Activated CD8-positive, alpha-beta memory T cell treated with anti-CD3 and anti-CD28 coated beads, Interleukin-2, amount 10 ng/mL, durations not matched to agents 7 days and 5 days (primary cell): ENCODE measurements at regions of chr16 and their contacts with region 1.

Region 1: DNA sequence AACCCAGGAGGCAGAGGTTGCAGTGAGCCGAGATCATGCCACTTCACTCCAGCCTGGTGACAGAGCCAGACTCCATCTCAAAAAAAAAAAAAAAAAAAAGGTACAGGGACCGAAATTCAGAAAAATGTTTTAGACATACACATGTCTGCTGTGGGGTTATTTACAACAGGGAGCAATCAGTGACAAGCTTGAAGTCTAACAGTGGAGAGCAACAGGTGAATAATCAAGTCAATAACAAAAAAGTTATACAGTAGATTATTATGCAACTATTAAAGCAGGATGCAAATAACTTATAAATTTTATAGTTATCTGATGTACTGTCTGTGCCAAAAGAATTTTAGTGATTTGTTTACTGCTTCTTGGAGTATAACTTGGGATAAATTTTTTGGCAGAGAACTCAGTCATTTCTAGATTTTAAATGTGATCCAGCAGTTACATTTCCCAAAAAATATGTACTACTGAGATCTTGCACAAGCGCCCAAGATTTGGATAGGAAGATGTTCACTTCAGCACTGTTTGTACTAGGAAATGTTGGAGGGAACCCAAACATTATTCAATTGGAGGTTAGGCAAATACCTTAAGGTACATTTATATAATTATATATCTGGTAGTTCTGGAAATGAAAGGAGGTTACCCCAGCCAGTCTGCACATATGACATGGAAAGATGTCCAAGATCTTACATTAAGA is 34.1 kb downstream of the EEF2K start:
- DNase-seq: no peak
- ATAC-seq: no peak
- H3K4me3 Mint-ChIP-seq: no peak overlapping the region
- H3K27ac Mint-ChIP-seq: peak overlapping the region; percentile 94
- H3K4me1 Mint-ChIP-seq: peaks cover 38% of the 10 kb centered on the region
- H3K27me3 Mint-ChIP-seq: no peaks in the 10 kb centered on the region

Region 2: GRCh38 chr16:22206013-22206841 is 33.9 kb before region 1 on chr16 and contains the start of gene EEF2K:
- CTCF ChIA-PET with region 1: interaction called, 12 read pairs
- DNase-seq: peak; percentile 92
- ATAC-seq: peak; percentile 95
- H3K4me3 Mint-ChIP-seq: peak within 1 kb of the TSS; percentile 97
- H3K27ac Mint-ChIP-seq: peak within 1 kb of the TSS; percentile 84
- H3K4me1 Mint-ChIP-seq: peaks cover 41% of the 10 kb centered on the region
- H3K27me3 Mint-ChIP-seq: no peaks in the 10 kb centered on the region
- total RNA-seq, gene EEF2K: 34.8 to 36.7 TPM

Region 3: GRCh38 chr16:22252317-22252716 is 12.2 kb after region 1 on chr16:
- CTCF ChIA-PET with region 1: interaction called, 10 read pairs
- DNase-seq: no peak
- ATAC-seq: no peak
- H3K4me3 Mint-ChIP-seq: no peak overlapping the region
- H3K27ac Mint-ChIP-seq: no peak overlapping the region
- H3K4me1 Mint-ChIP-seq: peaks cover 18% of the 10 kb centered on the region
- H3K27me3 Mint-ChIP-seq: no peaks in the 10 kb centered on the region